Left cardiac atrium (tissue), 4 donors: ENCODE measurements at regions of chr14 and their contacts with region 1.

Region 1: GRCh38 chr14:104639889-104640548 is 35.4 kb upstream of the TMEM179 start:
- DNase-seq: peak; percentile 63
- ATAC-seq: peak; percentile 86 to 91

Region 2: GRCh38 chr14:104130974-104131651 is 508.9 kb before region 1 on chr14:
- intact Hi-C with region 1: loop called in 1 of 2 experiments (anchors 5 kb)
- DNase-seq: peak; percentile 66
- ATAC-seq: peak; percentile 70 to 83

Region 3: DNA sequence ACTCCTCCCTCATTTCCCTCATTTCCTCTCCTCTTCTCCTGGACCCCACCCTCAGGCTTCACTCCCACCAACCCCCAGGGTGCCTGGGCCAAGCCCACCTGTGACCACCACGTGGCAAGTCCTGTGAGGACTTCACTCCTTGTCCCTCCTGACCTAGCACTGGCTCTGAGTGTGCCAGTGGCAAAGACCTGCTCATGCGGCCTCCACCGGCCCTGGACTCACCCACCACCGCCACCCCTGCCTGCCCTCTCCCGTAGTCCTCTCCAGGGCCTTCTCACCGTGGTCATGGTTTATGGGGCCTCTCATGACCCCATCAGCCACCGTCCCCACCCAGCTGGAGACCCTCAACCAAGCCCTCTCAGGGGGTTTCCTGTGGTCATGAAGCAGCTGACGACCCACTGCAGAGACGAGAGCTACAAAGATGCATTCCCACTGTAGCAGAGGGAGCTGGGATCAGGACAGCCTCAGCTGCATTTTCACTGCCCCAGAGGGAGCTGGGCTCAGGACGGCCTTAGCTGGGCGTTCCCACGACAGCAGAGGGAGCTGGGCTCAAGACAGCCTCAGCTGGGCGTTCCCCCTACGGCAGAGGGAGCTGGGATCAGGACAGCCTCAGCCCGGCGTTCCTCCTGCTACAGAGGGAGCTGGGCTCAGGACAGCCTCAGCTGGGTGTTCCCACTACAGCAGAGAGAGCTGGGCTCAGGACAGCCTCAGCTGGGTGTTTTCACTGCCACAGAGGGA is 63.6 kb before region 1 on chr14:
- intact Hi-C with region 1: loop called in 1 of 2 experiments (anchors 5 kb)
- DNase-seq: no peak
- ATAC-seq: no peak